GM10248 (cell line): ENCODE measurements at regions of chr12 and their contacts with region 1.

Region 1: GRCh38 chr12:122860346-122861090 is 25.3 kb downstream of the HIP1R start:
- DNase-seq: peak; percentile 88
- CTCF ChIP-seq: peak; percentile 97

Region 2: DNA sequence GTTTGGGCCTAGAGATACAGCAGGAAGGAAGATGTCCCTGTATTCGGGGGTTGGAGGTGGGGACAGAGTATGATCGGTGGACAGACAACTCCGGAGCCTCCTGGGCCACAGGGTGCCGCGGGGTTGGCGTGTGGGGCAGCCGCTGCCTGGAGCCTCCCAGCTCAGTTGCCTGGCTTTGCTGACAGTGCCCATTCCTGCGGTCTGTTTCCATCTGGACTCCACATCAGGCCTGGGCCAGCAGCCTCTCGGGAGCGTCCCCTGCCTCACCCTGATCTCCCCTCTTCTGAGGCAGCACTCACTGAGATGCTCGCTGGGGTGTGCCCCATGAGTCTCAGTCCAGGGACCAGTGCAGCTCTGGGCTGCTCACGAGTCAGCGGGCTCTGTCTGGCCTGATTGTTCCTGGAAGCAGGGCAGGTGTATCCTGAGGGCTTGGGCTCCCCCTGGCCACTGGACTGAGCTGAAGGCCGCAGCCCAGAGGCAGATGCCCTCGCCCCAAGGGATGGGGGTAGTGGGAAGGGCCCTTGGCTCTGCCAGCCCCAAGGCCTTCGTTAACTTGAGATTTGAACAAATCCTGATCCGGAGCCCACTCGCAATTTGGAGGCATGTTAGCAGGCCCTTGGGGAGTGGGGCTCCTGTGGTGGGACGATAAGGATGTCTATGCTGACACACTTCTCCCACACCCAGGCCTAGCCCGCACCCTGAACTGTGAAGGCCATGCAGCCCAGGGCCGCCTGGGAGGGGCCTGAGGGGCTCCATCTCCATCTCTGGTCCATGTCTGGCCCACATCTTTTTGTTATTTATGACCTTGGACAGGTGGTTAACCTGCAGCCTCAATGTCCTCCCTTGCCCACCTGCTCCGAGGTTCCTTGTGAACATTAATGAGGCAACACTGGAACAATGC is 17.8 kb before region 1 on chr12:
- CTCF ChIA-PET with region 1: interaction called, 42 read pairs
- POLR2A ChIA-PET with region 1: no interaction called
- DNase-seq: no peak
- CTCF ChIP-seq: no peak

Region 3: DNA sequence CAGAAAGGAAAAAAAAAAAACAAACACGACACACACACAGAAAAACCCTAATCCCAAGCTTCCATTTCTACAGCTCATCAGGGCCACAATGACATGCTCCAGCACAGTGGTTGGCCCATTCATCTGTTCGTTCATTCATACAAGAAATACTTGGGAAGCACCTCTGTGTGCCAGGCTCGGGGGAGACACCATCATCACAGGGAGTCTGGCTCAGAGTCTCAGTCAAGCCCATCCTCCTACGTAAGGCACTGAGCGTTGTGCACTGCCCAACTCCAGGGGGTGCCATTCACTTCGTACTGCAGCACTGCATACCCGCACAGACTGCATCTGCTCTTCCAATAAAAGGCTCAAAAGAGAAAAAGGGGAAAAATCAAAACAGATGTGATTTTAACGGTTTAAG is 20.1 kb after region 1 on chr12:
- CTCF ChIA-PET with region 1: interaction called, 62 read pairs
- POLR2A ChIA-PET with region 1: interaction called, 7 read pairs
- DNase-seq: no peak
- CTCF ChIP-seq: peak; percentile 40

Region 4: GRCh38 chr12:122951979-122952892 is 91.7 kb after region 1 on chr12:
- CTCF ChIA-PET with region 1: interaction called, 158 read pairs
- POLR2A ChIA-PET with region 1: no interaction called
- DNase-seq: peak; percentile 87
- CTCF ChIP-seq: peak; percentile 93

Region 5: DNA sequence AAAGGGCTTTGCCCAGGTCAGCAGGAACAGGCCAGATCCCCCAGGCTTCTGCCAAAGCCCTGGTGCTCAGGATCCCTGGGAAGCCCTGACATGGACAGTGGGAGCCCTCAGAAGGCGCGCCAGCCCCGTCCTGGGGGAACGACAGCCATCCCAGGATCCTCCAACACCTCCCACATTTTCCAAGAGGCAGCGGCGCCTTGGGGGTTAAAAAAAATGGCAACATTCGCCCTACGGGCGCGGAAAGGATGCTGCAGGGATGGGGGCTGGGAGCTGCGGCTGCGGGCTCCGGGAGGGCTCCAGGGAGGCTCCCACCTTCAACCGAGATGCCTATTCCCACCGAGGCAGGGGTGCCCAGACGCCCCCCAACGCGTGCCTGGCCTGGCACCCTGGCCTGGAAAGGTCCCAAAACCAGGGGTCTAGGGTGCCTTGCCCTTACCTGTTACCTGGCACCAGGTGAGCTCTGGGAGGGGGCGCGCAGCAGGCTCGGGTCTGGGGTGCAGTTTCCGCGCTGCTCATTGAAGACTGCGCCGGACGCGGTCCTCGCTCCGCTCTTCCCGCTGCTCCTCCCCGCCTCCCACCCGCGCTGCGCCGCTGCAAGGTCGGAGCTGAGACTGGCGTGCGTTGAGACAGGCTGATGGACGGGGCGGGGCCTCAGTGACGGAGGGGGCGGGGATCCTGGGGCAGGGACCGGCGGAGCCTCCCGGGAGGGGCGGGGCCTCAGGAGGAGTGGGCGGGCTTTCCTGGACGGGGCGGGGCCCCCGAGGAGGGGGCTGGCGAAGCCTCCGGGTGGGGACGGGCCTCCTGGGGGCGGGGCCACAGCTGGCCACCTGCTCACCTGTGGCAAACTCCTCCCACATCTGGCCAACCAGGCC is 105.6 kb after region 1 on chr12 and contains the start of gene ABCB9:
- CTCF ChIA-PET with region 1: interaction called, 10 read pairs
- POLR2A ChIA-PET with region 1: no interaction called
- DNase-seq: peak; percentile 98
- CTCF ChIP-seq: no peak

Region 6: GRCh38 chr12:123367511-123367910 is 507.0 kb after region 1 on chr12:
- CTCF ChIA-PET with region 1: no interaction called
- POLR2A ChIA-PET with region 1: no interaction called
- DNase-seq: no peak
- CTCF ChIP-seq: no peak

Region 7: GRCh38 chr12:123952037-123952436 is 1091.5 kb after region 1 on chr12:
- CTCF ChIA-PET with region 1: no interaction called
- POLR2A ChIA-PET with region 1: no interaction called
- DNase-seq: no peak
- CTCF ChIP-seq: no peak